ENCODE measurements at regions of chr4 and their contacts with region 1.

Region 1: DNA sequence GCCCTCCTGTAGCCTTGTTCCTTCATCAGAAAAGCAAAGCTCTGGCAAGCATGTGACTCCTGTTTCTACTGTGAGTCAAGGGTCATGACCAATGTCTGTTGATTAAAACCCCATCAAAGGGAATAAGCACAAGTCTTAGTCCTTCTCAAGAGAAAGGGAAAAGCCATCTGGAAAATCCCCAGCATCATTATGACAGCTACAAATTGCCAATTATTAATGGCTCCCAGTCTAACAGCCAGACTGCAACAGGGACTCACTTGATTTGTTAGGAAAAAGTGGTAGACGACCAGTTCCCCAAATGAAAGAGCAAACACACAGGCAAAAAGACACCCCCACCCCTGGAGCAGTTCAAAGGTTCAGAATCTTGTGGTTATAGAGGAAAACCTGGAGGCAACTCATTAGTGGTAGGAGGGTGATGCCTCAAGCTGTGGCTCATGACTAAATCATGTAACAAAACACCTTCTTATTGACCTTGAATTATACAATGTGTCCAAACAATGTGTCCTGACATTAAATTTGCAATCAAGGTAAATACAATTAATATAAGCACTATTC is 315.7 kb downstream of the HNRNPD start:
- DNase-seq: no peak
- H3K4me3 ChIP-seq: no peak overlapping the region
- H3K27ac ChIP-seq: no peak overlapping the region
- H3K4me1 ChIP-seq: no peaks in the 10 kb centered on the region
- H3K27me3 ChIP-seq: no peaks in the 10 kb centered on the region
- CTCF ChIP-seq: no peak
- POLR2A ChIP-seq: no peak

Region 2: GRCh38 chr4:82661181-82661992 is 603.3 kb after region 1 on chr4:
- intact Hi-C with region 1: loop called (anchors 5 kb)
- DNase-seq: no peak
- H3K4me3 ChIP-seq: no peak overlapping the region
- H3K27ac ChIP-seq: no peak overlapping the region
- H3K4me1 ChIP-seq: no peaks in the 10 kb centered on the region
- H3K27me3 ChIP-seq: no peaks in the 10 kb centered on the region
- CTCF ChIP-seq: no peak
- POLR2A ChIP-seq: no peak

Region 3: DNA sequence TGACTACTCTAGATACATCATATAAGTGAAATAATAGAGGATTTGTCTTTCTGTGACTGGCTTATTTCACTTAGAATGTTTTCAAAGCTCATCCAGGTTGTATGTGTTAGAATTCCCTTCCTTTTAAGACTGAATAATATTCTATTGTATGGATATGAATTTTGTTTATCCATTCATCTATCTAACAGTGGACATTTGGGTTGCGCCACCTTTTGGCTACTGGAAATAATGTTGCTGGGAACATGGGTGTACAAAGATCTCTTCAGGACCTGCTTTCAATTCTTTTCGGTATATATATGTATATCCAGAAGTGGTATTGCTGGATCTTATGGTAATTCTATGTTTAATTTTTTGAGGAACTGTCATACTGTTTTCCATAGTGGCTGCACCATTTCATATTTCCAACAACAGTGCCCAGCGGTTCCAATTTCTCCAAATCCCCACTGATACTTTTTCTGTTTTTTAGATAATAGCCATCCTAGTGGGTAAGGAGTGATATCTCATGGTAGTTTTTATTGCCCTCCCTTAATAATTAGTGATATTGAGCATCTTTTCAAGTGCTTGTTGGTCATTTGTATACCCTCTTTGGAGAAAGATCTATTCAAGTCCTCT is 743.9 kb after region 1 on chr4:
- intact Hi-C with region 1: no loop called
- DNase-seq: no peak
- H3K4me3 ChIP-seq: no peak overlapping the region
- H3K27ac ChIP-seq: no peak overlapping the region
- H3K4me1 ChIP-seq: peaks cover 0 to 4% of the 10 kb centered on the region in 2 donors
- H3K27me3 ChIP-seq: no peaks in the 10 kb centered on the region
- CTCF ChIP-seq: peak in 1 of 3 donors; percentile 20
- POLR2A ChIP-seq: no peak